ENCODE measurements at regions of chr6 and their contacts with region 1.

Region 1: GRCh38 chr6:26295691-26296555 is 69.1 kb upstream of the BTN3A2 start:
- DNase-seq: no peak
- H3K4me3 ChIP-seq: no peak overlapping the region
- H3K27ac ChIP-seq: no peak overlapping the region
- H3K4me1 ChIP-seq: no peaks in the 10 kb centered on the region
- H3K27me3 ChIP-seq: no peaks in the 10 kb centered on the region
- CTCF ChIP-seq: no peak
- POLR2A ChIP-seq: no peak

Region 2: DNA sequence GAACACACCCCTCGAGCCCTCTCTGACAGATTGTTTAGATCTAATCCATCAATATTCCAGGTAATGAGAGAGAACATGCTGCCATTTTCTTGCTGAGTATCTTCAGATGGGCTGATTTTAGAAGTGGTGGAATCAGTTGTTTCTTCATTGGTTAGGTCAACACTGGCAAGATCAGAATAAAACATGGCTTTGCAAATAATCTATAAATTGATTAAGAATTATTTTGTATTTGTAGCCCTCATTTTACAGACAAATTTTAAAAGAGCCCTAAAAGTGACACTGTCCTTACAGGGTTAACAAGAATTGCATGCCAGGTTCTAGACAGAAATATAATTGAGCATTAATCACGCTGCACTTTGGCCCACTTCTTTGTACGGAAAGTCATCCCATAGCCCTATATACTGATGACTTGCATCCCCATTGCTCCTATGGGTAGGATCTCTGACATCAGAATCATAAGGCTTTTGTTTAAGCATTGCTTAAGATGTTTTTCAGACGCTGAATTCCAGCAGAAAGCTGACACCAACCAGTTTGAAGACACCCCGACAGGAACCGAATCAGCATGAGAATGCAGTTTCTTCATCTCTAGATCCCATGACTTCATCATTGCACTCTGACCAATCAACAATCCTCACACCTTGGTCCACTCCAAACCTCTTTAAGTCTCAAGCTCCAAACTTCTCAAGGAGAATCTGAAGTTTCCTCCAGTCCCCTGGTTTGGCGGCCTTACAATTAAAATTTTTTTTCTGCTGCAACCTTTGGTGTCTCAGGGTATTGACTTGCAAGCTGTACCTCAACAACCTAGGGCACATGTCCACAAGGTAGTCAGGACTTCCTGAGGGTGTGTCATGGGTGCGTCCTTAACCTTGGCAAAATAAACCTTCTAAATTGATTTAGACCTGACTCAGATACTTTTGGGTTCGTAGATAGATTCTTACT is 1637.1 kb before region 1 on chr6:
- intact Hi-C with region 1: loop called (anchors 10 kb)
- DNase-seq: no peak
- H3K4me3 ChIP-seq: no peak overlapping the region
- H3K27ac ChIP-seq: no peak overlapping the region
- H3K4me1 ChIP-seq: peaks cover 19% of the 10 kb centered on the region
- H3K27me3 ChIP-seq: no peaks in the 10 kb centered on the region
- CTCF ChIP-seq: no peak
- POLR2A ChIP-seq: no peak

Region 3: GRCh38 chr6:25130518-25130917 is 1165.4 kb before region 1 on chr6:
- intact Hi-C with region 1: no loop called
- DNase-seq: no peak
- H3K4me3 ChIP-seq: no peak overlapping the region
- H3K27ac ChIP-seq: peak overlapping the region; percentile 64
- H3K4me1 ChIP-seq: peaks cover 33% of the 10 kb centered on the region
- H3K27me3 ChIP-seq: no peaks in the 10 kb centered on the region
- CTCF ChIP-seq: no peak
- POLR2A ChIP-seq: no peak

Region 4: GRCh38 chr6:26195376-26195923 is 100.5 kb before region 1 on chr6:
- intact Hi-C with region 1: no loop called
- DNase-seq: no peak
- H3K4me3 ChIP-seq: peak overlapping the region; percentile 52 to 55
- H3K27ac ChIP-seq: peak overlapping the region; percentile 68
- H3K4me1 ChIP-seq: peaks cover 26% of the 10 kb centered on the region
- H3K27me3 ChIP-seq: no peaks in the 10 kb centered on the region
- CTCF ChIP-seq: no peak
- POLR2A ChIP-seq: no peak

Region 5: GRCh38 chr6:26662642-26663041 is 366.7 kb after region 1 on chr6:
- intact Hi-C with region 1: no loop called
- DNase-seq: no peak
- H3K4me3 ChIP-seq: no peak overlapping the region
- H3K27ac ChIP-seq: no peak overlapping the region
- H3K4me1 ChIP-seq: peaks cover 14% of the 10 kb centered on the region
- H3K27me3 ChIP-seq: no peaks in the 10 kb centered on the region
- CTCF ChIP-seq: no peak
- POLR2A ChIP-seq: no peak

Measured in vagina (tissue), 2 donors.